PC-3 (cell line): ENCODE measurements at regions of chr17 and their contacts with region 1.

Region 1: DNA sequence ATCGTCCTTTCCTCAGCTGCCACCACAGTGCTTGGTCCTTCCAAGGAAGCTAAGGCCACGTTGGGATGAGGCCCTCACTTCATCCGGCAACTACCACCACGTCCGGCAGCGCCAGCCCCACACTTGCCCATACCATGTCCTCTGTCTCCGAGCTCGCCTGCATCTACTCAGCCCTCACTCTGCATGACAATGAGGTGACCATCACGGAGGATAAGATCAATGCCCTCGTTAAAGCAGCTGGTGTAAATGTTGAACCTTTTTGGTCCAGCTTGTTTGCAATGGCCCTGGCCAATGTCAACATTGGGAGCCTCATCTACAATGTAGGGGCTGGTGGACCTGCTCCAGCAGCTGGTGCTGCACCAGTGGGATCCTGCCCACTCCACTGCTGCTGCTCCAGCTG is 44.9 kb downstream of the TTC19 start:
- DNase-seq: no peak
- ATAC-seq: no peak
- H3K4me3 ChIP-seq: no peak overlapping the region
- H3K27ac ChIP-seq: no peak overlapping the region
- H3K4me1 ChIP-seq: no peaks in the 10 kb centered on the region
- H3K27me3 ChIP-seq: no peaks in the 10 kb centered on the region
- CTCF ChIP-seq: no peak

Region 2: GRCh38 chr17:16353317-16354174 is 309.1 kb after region 1 on chr17 and contains the start of gene CENPV:
- CTCF ChIA-PET with region 1: interaction called, 14 read pairs
- POLR2A ChIA-PET with region 1: no interaction called
- intact Hi-C with region 1: no loop called
- DNase-seq: no peak
- ATAC-seq: no peak
- H3K4me3 ChIP-seq: no peak within 1 kb of the TSS
- H3K27ac ChIP-seq: no peak within 1 kb of the TSS
- H3K4me1 ChIP-seq: peaks cover 2% of the 10 kb centered on the region; the same call in 1 of the 2 replicates
- H3K27me3 ChIP-seq: no peaks in the 10 kb centered on the region
- CTCF ChIP-seq: no peak
- total RNA-seq, gene CENPV: not detected in 2 replicates